HepG2 (cell line): ENCODE measurements at regions of chr16 and their contacts with region 1.

Region 1: DNA sequence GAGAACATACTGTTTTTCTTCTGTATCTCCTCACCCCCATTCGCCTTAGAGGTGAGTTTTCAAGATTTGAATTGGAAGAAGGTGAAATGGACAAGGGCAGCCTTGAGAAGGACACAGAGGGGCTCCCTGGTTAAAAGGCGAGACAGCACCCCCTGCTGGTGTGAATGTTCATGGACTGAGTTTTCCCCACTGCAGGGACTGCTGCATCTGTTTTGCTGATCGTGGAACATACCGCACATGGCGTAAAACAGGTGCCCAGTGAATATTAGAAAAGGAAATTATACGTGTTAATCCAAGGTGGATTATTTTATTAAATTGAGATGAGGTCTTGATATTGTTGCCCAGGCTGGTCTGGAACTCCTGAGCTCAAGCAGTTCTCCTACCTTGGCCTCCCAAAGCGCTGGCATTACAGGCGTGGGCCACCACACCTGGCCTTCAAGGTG is 54.5 kb downstream of the NDE1 start:
- DNase-seq: peak; percentile 75
- ATAC-seq: peak; percentile 88
- H3K4me3 ChIP-seq: no peak overlapping the region
- H3K27ac ChIP-seq: no peak overlapping the region
- H3K4me1 ChIP-seq: no peaks in the 10 kb centered on the region
- H3K27me3 ChIP-seq: no peaks in the 10 kb centered on the region; a peak in 1 of 5 replicates
- CTCF ChIP-seq: peak; percentile 97
- EP300 ChIP-seq: no peak
- POLR2A ChIP-seq: no peak
- RAD21 ChIP-seq: peak; percentile 87

Region 2: DNA sequence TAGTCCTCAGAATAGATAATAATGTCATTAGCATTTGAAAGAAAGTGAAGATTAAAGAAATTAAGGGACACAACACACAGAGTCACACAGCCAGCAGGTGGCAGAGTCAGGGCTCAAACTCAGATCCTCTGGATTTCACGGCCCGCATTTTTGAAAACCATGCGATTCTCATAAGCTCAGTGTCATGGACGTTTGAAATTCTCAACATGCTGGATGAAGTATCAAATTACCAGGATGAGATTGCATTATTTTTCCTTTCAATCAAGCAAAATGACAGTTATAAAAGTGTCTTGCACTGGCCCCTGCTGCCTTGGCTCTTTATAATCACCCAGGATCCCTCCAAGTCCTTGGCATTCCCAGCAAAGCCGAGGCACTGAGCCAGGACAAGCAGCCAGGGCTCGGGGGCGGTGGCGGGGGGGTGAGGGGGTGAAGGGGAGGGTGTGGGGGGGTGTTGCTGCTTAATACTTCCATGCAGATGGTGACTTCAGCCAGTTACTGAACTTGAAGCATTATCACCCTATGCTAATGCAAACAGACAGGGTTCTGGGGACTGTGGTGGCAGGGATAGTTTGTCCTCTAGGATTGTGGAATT is 276.8 kb before region 1 on chr16:
- CTCF ChIA-PET with region 1: interaction called, 29 read pairs
- POLR2A ChIA-PET with region 1: no interaction called
- in situ Hi-C with region 1: loop called (anchors 10 kb)
- intact Hi-C with region 1: loop called (anchors 1 kb)
- DNase-seq: peak; percentile 69
- ATAC-seq: peak; percentile 85
- H3K4me3 ChIP-seq: peak overlapping the region in 2 of 3 experiments; percentile 20 to 26; a peak in 3 of 6 replicates
- H3K27ac ChIP-seq: no peak overlapping the region
- H3K4me1 ChIP-seq: peaks cover 6% of the 10 kb centered on the region; the same call in 1 of the 2 replicates
- H3K27me3 ChIP-seq: 0 out of 5 replicates have a peak, but pooled peaks cover 0 to 5% of the 10 kb centered on the region in 2 experiments
- CTCF ChIP-seq: peak; percentile 79
- EP300 ChIP-seq: no peak
- POLR2A ChIP-seq: no peak
- RAD21 ChIP-seq: peak; percentile 86

Region 3: DNA sequence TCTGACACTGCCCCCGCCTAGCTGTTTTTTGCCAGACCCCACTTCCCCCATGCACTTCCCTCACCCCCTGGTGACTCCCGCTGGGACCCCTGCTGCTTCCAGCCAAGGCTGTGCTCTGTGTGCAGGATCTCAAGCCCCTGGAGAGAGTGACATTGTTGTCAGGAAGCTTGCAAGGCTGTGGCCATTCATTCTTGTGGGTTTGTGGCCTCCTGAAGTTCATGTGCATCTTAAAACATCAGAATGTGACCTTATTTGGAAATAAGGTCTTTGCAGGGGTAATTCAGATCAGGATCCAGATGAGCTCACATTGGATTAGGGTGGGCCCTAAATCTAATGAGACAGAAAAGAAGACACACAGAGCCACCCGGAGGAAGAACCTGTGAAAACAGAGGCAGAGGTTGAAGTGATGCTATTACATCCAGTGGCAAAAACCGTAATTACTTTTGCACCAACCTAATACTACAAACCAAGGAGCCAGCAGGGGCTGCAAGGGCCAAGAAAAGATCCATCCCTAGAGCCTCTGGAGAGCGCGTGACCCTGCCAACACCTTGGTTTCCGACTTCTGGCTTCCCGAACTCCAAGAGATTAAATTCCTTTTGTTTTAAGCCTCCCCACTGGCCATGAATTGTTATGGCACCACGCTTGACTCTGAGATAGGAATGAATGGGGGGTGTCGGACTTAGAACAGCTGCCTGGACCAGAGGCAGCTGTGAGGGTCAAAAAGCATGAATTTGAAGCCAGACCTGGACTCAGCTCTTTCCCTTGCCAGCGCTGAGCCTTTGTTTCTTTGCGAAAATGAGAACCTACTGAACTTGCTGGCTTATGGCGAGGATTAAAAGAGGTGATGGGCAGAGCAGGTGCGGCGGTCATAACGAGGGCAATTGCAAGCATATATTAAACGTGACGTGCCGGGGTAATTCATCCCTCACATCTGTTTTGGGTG is 194.7 kb before region 1 on chr16:
- CTCF ChIA-PET with region 1: no interaction called
- POLR2A ChIA-PET with region 1: no interaction called
- in situ Hi-C with region 1: loop called (anchors 5 kb)
- intact Hi-C with region 1: no loop called
- DNase-seq: no peak
- ATAC-seq: no peak; the same call in 2 of the 3 replicates
- H3K4me3 ChIP-seq: no peak overlapping the region
- H3K27ac ChIP-seq: no peak overlapping the region
- H3K4me1 ChIP-seq: no peaks in the 10 kb centered on the region
- H3K27me3 ChIP-seq: no peaks in the 10 kb centered on the region
- CTCF ChIP-seq: 0 out of 2 replicates have a peak, but pooled peaks have one; percentile 14
- EP300 ChIP-seq: no peak
- POLR2A ChIP-seq: no peak
- RAD21 ChIP-seq: no peak

Region 4: DNA sequence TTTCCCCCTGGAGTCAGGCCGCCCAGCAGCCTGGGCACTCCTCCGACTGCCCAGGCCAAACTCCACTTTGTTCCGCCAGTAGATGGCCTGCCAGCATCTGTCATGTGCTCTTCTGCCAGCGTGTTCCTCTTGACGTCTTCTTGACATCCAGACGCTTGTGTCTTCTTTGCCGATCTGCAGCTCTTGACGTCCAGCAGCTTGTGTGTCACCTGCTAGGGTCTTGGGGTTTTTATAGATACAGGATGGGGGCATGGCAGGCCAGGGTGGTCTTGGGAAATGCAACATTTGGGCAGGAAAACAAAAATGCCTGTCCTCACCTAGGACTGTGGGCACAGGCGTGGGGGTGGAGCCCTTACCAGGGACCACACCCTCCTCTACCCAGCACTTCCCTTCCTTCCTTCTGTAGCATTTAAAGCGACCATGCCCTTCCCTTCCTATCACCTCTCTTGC is 181.4 kb before region 1 on chr16:
- CTCF ChIA-PET with region 1: interaction called, 13 read pairs
- POLR2A ChIA-PET with region 1: no interaction called
- in situ Hi-C with region 1: no loop called
- intact Hi-C with region 1: loop called (anchors 1 kb)
- DNase-seq: peak; percentile 58
- ATAC-seq: peak; percentile 89
- H3K4me3 ChIP-seq: no peak overlapping the region
- H3K27ac ChIP-seq: no peak overlapping the region
- H3K4me1 ChIP-seq: peaks cover 26% of the 10 kb centered on the region
- H3K27me3 ChIP-seq: no peaks in the 10 kb centered on the region
- CTCF ChIP-seq: peak; percentile 91
- EP300 ChIP-seq: no peak
- POLR2A ChIP-seq: no peak
- RAD21 ChIP-seq: peak; percentile 85

Region 5: GRCh38 chr16:15539197-15539596 is 165.4 kb before region 1 on chr16:
- CTCF ChIA-PET with region 1: interaction called, 3 read pairs
- POLR2A ChIA-PET with region 1: no interaction called
- in situ Hi-C with region 1: no loop called
- intact Hi-C with region 1: loop called (anchors 5 kb)
- DNase-seq: peak; percentile 49
- ATAC-seq: peak; percentile 89
- H3K4me3 ChIP-seq: no peak overlapping the region
- H3K27ac ChIP-seq: no peak overlapping the region
- H3K4me1 ChIP-seq: no peaks in the 10 kb centered on the region
- H3K27me3 ChIP-seq: no peaks in the 10 kb centered on the region
- CTCF ChIP-seq: peak; percentile 63
- EP300 ChIP-seq: no peak
- POLR2A ChIP-seq: no peak
- RAD21 ChIP-seq: peak; percentile 67

Region 6: DNA sequence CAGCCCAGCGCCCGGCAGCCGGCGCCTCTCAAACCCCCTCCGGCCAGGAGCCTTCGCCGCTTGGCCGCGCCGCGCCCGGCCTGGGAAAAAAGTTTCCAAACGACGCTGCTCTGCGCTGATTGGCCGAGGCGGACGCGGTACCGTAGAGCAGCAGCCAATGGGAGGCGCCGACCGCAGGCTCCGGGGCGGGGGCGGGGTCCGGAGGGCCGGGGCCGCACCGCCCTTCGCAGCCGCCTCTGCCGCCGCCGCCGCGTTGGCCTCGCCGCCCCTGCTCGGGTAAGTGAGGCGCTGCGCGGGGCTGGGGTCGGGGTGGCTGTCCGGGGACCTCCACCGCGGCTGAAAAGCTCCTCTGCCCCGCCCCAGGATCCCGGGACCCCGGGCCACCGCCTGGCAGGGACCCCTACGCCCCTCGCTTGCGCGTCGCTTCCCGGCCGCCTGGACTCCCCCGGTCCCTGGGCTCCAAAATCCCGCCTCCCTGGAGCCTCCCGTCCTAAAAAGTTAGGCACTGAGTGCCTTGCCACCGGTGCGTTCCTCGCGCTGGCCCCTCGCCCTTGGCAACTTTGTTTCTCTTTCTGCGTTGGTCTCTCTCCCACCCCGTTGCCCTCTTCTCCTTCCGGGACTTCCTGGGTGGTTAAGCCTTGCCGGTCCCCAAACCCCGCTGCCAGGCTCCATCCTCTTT is 54.4 kb before region 1 on chr16 and contains the start of gene NDE1:
- CTCF ChIA-PET with region 1: no interaction called
- POLR2A ChIA-PET with region 1: no interaction called
- in situ Hi-C with region 1: no loop called
- intact Hi-C with region 1: loop called (anchors 2 kb)
- DNase-seq: peak; percentile 93
- ATAC-seq: peak; percentile 99
- H3K4me3 ChIP-seq: peak within 1 kb of the TSS; percentile 88 to 100 (median 93)
- H3K27ac ChIP-seq: peak within 1 kb of the TSS; percentile 74
- H3K4me1 ChIP-seq: peaks cover 70% of the 10 kb centered on the region
- H3K27me3 ChIP-seq: peaks cover 0 to 6% of the 10 kb centered on the region in 2 experiments; a peak in 1 of 5 replicates
- CTCF ChIP-seq: peak; percentile 34; the same call in 1 of the 2 replicates
- EP300 ChIP-seq: no peak
- POLR2A ChIP-seq: peak; percentile 61 to 81; a peak in 3 of 4 replicates
- RAD21 ChIP-seq: peak; percentile 34; the same call in 1 of the 2 replicates
- total RNA-seq, gene NDE1: 72.5 and 79.2 TPM in 2 replicates

Region 7: DNA sequence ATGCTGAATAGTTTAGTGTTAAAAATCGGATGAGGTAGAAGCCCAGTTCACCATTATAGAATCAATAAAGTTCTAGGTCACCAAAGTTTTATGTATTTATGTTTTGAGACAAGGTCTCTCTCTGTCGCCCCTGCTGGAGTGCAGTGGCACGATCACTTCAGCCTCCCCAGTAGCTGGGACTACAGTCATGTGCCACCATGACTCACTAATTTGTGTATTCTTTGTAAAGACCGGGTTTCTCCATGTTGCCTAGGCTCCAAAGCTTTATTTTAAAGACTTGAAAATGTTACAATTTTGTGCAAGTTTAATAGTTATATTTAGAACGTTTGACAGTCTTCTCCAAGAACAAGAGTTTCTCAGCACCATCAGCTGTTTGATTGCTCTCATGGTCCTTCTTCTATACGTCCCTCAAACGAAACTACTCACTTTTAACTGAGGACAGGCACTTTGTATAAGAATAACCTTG is 22.4 kb before region 1 on chr16:
- CTCF ChIA-PET with region 1: interaction called, 3 read pairs
- POLR2A ChIA-PET with region 1: no interaction called
- in situ Hi-C with region 1: no loop called
- intact Hi-C with region 1: loop called (anchors 1 kb)
- DNase-seq: peak; percentile 89
- ATAC-seq: peak; percentile 96
- H3K4me3 ChIP-seq: no peak overlapping the region
- H3K27ac ChIP-seq: peak overlapping the region; percentile 53
- H3K4me1 ChIP-seq: peaks cover 14% of the 10 kb centered on the region
- H3K27me3 ChIP-seq: no peaks in the 10 kb centered on the region
- CTCF ChIP-seq: peak; percentile 61
- EP300 ChIP-seq: no peak
- POLR2A ChIP-seq: no peak
- RAD21 ChIP-seq: peak; percentile 48; the same call in 1 of the 2 replicates